Breast epithelium (tissue), 4 donors: ENCODE measurements at regions of chr13 and their contacts with region 1.

Region 1: GRCh38 chr13:45325806-45326205 is 15.2 kb downstream of the TPT1 start:
- DNase-seq: no peak
- H3K4me3 ChIP-seq: no peak overlapping the region
- H3K27ac ChIP-seq: peak overlapping the region in 1 of 2 donors; percentile 40
- H3K4me1 ChIP-seq: no peaks in the 10 kb centered on the region
- H3K27me3 ChIP-seq: no peaks in the 10 kb centered on the region
- CTCF ChIP-seq: no peak
- POLR2A ChIP-seq: no peak

Region 2: DNA sequence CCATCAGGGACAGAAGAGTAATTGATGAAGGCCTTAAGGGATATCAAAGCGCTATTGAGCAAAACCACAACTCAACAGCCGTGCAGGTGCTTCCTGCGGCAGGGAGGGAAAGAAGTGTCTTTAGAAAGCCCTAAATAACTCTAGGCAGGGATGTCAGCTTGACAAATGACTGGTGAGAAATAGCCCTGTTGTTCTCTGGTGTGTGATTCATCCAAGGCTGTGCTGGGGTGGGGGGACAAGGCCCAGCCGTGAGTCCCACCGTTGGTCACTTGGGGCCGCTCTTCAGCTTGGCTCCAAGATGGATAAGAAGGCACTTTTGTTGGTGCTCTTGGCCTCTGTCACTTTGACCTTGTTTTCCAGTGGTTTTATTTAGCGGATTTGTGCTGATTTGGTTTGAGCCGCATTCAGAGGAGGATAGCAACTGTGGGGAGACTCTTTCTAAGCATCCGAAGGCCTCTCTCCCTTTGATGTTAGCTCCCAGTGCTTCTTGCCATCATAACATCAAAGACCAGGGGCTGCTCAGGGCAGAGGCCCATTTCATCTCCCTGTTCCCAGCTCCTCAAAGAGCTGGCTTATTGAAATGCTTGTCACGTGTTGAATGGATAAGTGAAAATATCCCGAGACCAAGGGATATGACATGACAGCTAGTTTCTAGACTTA is 1082.5 kb before region 1 on chr13:
- intact Hi-C with region 1: loop called (anchors 10 kb)
- DNase-seq: peak in 1 of 2 donors; percentile 45
- H3K4me3 ChIP-seq: no peak overlapping the region
- H3K27ac ChIP-seq: peak overlapping the region; percentile 60 to 64
- H3K4me1 ChIP-seq: no peaks in the 10 kb centered on the region
- H3K27me3 ChIP-seq: no peaks in the 10 kb centered on the region
- CTCF ChIP-seq: peak in 2 of 3 donors; percentile 11 to 60
- POLR2A ChIP-seq: no peak

Region 3: GRCh38 chr13:45393941-45394570 is 68.2 kb after region 1 on chr13:
- intact Hi-C with region 1: no loop called
- DNase-seq: peak in 1 of 2 donors; percentile 61
- H3K4me3 ChIP-seq: no peak overlapping the region
- H3K27ac ChIP-seq: peak overlapping the region; percentile 23 to 27
- H3K4me1 ChIP-seq: no peaks in the 10 kb centered on the region
- H3K27me3 ChIP-seq: no peaks in the 10 kb centered on the region
- CTCF ChIP-seq: no peak
- POLR2A ChIP-seq: no peak